ENCODE measurements at regions of chr20 and their contacts with region 1.

Region 1: DNA sequence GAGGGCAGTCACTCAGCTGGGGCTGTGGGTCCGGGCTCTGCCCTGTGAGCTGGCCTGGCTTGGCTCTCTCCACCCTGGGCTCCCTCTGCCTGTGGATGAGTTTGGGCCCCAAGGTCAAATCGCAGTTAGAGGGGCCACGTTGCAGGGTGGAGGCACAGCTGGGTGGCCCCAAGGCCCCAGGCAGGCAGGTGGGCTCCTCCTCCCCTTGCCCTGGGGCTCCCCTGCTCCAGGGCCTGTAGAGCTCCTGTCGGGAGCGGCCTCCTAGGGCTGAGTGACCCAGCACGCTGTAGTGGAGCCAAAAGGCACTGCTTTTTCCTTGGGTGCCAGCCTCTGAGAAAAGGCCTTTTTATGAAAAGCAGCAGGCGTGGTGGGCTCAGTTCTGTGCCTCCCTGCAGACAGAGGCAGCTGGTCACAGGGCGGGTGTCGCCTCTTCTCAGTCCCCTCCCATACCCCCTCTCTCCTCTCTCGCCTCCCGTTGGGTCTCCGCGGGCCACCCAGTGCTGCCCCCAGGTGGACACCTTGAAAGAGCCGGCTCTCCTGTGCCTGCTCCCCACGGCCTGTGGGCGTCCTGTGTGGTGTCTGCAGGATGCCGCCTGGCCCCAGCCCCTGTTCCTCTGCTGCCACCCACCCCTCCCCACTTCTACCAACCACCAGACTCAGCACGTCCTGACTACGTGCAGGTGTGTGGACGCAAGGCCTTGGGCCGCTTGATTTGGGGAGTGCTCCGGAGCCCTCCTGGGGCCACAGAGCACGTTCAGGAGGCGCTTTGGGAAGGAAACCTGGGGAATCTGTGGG is 13.2 kb downstream of the SS18L1 start:
- DNase-seq: no peak
- H3K4me3 ChIP-seq: no peak overlapping the region
- H3K27ac ChIP-seq: no peak overlapping the region
- H3K4me1 ChIP-seq: peaks cover 51% of the 10 kb centered on the region
- H3K27me3 ChIP-seq: no peaks in the 10 kb centered on the region
- CTCF ChIP-seq: peak; percentile 47 to 67

Region 2: DNA sequence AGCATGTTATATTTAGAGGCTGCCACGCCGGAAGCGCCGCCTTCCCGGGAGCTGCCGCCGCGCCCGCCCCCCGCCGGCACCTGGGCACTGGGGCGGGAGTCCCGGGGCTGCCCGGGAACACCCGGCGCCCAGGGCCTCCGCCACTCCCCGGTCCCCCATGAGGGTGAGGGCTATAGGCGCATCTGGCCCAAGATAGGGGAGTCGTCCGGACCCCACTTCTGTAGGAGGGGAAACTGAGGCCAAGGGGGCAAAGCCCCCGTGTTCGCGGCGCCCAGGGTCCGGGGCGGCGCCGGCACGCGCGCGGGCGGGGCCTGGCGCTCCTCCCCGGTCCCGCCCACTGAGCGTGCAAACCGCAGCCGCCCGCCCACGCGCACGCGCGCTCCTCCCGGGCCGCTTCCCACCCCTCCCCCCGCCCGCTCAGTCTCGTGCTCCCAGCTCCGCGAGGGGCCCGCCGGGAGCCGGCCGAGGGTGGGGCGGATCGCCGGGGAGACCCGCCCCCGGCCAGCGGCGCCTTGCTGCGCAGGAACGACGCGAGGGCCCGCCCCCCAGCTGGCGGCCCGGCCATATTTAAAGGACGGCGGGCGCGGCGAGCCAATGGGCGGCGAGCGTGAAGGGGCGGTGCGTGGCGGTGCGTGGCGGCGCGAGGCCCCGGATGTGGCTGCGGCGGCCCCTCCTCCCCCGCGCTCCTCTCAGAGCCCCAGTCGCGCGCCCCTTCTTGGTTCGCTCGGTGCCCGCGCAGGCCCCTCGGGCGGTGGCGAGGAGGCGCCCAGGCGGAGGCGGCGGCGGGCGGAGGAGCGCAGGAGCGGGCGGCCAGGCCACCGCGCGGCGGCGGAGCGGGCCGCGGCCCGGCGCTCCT is 34.8 kb before region 1 on chr20 and contains the start of gene LSM14B:
- CTCF ChIA-PET with region 1: no interaction called
- dilution Hi-C with region 1: no loop called
- in situ Hi-C with region 1: no loop called
- intact Hi-C with region 1: no loop called
- DNase-seq: peak; percentile 97
- H3K4me3 ChIP-seq: peak within 1 kb of the TSS; percentile 79 to 82 (median 80)
- H3K27ac ChIP-seq: peak within 1 kb of the TSS; percentile 73
- H3K4me1 ChIP-seq: peaks cover 8% of the 10 kb centered on the region
- H3K27me3 ChIP-seq: no peaks in the 10 kb centered on the region
- CTCF ChIP-seq: no peak
- total RNA-seq, gene LSM14B: 31.5 to 36.3 TPM

Region 3: GRCh38 chr20:62143118-62143973 is 13.4 kb before region 1 on chr20 and contains the starts of genes PSMA7 and SS18L1:
- CTCF ChIA-PET with region 1: no interaction called
- dilution Hi-C with region 1: no loop called
- in situ Hi-C with region 1: no loop called
- intact Hi-C with region 1: loop called (anchors 1 kb)
- DNase-seq: peak; percentile 86
- H3K4me3 ChIP-seq: peak within 1 kb of the TSS; percentile 78 to 83 (median 81)
- H3K27ac ChIP-seq: peak within 1 kb of the TSS; percentile 67
- H3K4me1 ChIP-seq: peaks cover 23% of the 10 kb centered on the region
- H3K27me3 ChIP-seq: no peaks in the 10 kb centered on the region
- CTCF ChIP-seq: no peak
- total RNA-seq, gene PSMA7: 173 to 303 TPM
- total RNA-seq, gene SS18L1: 16.3 to 20.6 TPM

Region 4: GRCh38 chr20:62237801-62238571 is 81.2 kb after region 1 on chr20 and contains the start of gene OSBPL2:
- CTCF ChIA-PET with region 1: no interaction called
- dilution Hi-C with region 1: no loop called
- in situ Hi-C with region 1: no loop called
- intact Hi-C with region 1: loop called (anchors 5 kb)
- DNase-seq: peak; percentile 99
- H3K4me3 ChIP-seq: peak within 1 kb of the TSS; percentile 67 to 86 (median 78)
- H3K27ac ChIP-seq: peak within 1 kb of the TSS; percentile 63
- H3K4me1 ChIP-seq: peaks cover 28% of the 10 kb centered on the region
- H3K27me3 ChIP-seq: no peaks in the 10 kb centered on the region
- CTCF ChIP-seq: no peak
- total RNA-seq, gene OSBPL2: 39.7 to 52.4 TPM